ENCODE measurements at regions of chr5 and their contacts with region 1.

Region 1: DNA sequence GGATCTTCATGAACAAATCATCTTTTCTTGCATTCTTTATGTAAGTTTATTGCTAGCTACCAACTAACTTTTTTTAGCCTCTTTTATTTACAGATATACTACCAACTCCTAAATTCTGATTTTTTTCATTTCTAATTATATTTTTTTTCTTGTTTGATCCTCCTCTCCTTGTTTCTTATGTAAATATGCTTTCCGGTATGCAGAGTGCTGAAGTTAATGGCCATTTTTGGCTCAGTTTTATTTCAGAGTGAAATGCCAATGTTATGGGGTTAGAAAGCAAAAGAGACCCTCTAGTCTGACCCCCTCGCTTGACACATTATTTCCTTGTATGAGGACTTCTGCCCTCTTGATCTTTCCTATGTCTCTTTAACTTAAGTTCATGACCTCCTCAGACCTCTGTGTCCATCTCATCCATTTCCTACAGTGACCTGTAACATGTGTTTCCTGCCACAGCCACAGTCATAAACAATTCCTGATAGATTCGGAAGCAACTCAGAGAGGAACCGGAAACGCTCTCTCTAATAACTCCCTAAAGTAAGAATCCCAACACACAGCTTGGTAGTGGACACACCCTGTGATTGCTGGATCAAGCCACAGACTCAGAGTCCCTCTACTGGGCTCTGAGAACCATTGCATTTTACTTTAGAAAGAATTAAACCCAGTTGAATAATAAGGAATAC is 42.9 kb upstream of the AFAP1L1 start:
- DNase-seq: peak; percentile 98
- ATAC-seq: peak; percentile 91
- H3K4me3 ChIP-seq: no peak overlapping the region
- H3K27ac ChIP-seq: peak overlapping the region; percentile 17
- H3K4me1 ChIP-seq: peaks cover 34% of the 10 kb centered on the region
- H3K27me3 ChIP-seq: no peaks in the 10 kb centered on the region
- CTCF ChIP-seq: peak; percentile 100

Region 2: DNA sequence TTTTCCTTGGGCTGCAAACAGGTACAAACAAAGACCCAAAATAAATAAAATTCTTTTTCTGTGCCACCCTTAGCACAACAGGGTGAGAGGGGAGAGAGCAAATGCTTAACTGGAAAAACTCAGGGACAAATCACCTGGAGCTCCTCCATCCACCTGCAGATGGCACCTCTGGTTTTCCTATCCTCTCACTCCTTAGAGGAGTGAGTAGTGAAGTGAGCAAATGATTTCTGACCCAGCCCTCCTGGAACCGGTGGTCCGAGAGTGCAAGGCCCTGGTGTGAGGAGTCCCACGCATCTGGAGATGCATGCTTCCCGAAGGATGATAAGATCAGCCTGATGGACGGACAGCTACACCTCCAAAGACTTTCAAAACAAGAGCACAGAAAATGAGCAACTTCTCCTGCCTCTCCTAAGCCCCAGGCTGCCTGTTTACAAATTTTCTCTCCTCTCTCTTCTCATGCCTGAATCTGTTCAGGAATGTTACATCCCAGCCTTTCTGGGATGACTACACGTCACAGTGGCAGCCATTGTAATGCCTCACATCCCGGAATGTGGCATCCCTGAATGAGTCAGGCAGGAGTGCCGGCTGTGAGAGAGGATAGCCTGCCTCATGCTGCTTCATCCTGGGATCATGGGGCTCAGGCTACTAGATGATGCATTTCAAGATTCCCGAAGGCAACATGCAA is 315.9 kb before region 1 on chr5:
- CTCF ChIA-PET with region 1: no interaction called
- POLR2A ChIA-PET with region 1: no interaction called
- intact Hi-C with region 1: loop called (anchors 2 kb)
- DNase-seq: peak; percentile 100
- ATAC-seq: peak; percentile 62
- H3K4me3 ChIP-seq: peak overlapping the region; percentile 19; the same call in 1 of the 2 replicates
- H3K27ac ChIP-seq: peak overlapping the region; percentile 88
- H3K4me1 ChIP-seq: peaks cover 80% of the 10 kb centered on the region
- H3K27me3 ChIP-seq: no peaks in the 10 kb centered on the region
- CTCF ChIP-seq: peak; percentile 97

Region 3: GRCh38 chr5:149063017-149063687 is 165.6 kb before region 1 on chr5 and contains the start of gene SH3TC2:
- CTCF ChIA-PET with region 1: no interaction called
- POLR2A ChIA-PET with region 1: no interaction called
- intact Hi-C with region 1: loop called (anchors 2 kb)
- DNase-seq: peak; percentile 96
- ATAC-seq: peak; percentile 76
- H3K4me3 ChIP-seq: peak within 1 kb of the TSS; percentile 47
- H3K27ac ChIP-seq: peak within 1 kb of the TSS; percentile 95
- H3K4me1 ChIP-seq: peaks cover 58% of the 10 kb centered on the region
- H3K27me3 ChIP-seq: no peaks in the 10 kb centered on the region
- CTCF ChIP-seq: no peak
- total RNA-seq, gene SH3TC2: 32.0 and 40.0 TPM in 2 replicates

Region 4: GRCh38 chr5:149133795-149134780 is 94.7 kb before region 1 on chr5:
- CTCF ChIA-PET with region 1: interaction called, 18 read pairs
- POLR2A ChIA-PET with region 1: interaction called, 4 read pairs
- intact Hi-C with region 1: loop called (anchors 1 kb)
- DNase-seq: peak; percentile 100
- ATAC-seq: peak; percentile 76
- H3K4me3 ChIP-seq: peak overlapping the region; percentile 1; the same call in 1 of the 2 replicates
- H3K27ac ChIP-seq: peak overlapping the region; percentile 86
- H3K4me1 ChIP-seq: peaks cover 64% of the 10 kb centered on the region
- H3K27me3 ChIP-seq: no peaks in the 10 kb centered on the region
- CTCF ChIP-seq: no peak

Region 5: DNA sequence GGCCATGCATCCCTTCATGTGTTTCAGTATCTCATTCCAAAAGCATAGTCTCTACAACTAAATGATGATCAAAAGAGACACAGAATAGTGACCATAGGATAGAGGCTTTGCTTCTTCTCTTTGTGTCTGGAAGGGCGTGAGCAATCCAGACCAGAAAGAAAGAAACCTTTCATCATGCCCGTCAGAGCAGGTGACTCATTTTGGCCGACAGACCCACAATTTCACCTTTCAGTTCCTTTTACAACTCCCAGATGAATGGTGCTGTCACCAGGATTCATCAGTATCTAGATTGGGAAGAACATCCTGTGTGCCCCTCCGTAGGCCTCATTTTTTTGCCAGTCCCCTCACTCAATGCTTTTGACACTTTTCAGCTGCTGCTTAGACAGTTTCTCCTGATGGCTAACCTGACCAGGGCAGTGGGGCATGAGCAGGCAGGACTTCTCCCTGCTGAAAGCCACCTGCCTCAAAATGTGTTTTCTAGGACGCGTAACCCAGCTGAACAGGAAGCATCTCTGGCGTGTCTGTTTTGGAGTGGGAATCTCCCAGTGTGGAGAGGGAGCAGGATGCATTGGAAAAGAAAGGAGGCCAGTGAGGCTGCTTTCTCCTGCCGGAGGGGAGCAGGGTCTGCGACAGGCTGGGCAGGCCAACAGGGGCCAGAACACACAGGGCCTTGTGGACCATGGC is 66.2 kb before region 1 on chr5:
- CTCF ChIA-PET with region 1: no interaction called
- POLR2A ChIA-PET with region 1: no interaction called
- intact Hi-C with region 1: loop called (anchors 1 kb)
- DNase-seq: peak; percentile 98
- ATAC-seq: peak; percentile 92
- H3K4me3 ChIP-seq: no peak overlapping the region
- H3K27ac ChIP-seq: peak overlapping the region; percentile 72
- H3K4me1 ChIP-seq: peaks cover 35% of the 10 kb centered on the region
- H3K27me3 ChIP-seq: no peaks in the 10 kb centered on the region
- CTCF ChIP-seq: no peak

Region 6: DNA sequence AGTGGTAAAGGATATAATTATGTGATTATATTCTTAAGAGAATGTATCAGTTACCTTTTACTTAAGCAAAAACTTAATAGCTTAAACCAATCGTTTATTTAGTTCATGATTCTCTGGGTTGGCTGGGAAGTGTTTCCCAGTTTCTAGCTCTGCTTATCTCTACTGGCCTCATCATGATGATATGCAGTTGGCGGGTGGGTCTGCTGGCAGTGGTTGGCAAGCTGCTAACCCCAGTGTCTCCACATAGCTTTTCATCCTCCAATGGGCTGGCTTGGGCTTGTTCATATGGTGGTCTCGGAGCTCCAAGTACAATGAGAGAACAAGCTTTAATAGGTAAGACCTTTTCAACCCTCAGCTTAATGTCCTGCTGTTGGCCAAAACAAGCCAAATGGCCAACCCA is 43.7 kb before region 1 on chr5:
- CTCF ChIA-PET with region 1: no interaction called
- POLR2A ChIA-PET with region 1: no interaction called
- intact Hi-C with region 1: loop called (anchors 1 kb)
- DNase-seq: no peak
- ATAC-seq: no peak
- H3K4me3 ChIP-seq: no peak overlapping the region
- H3K27ac ChIP-seq: no peak overlapping the region
- H3K4me1 ChIP-seq: peaks cover 30% of the 10 kb centered on the region
- H3K27me3 ChIP-seq: no peaks in the 10 kb centered on the region
- CTCF ChIP-seq: no peak